Heart right ventricle (tissue), 16 donors: ENCODE measurements at regions of chr5 and their contacts with region 1.

Region 1: DNA sequence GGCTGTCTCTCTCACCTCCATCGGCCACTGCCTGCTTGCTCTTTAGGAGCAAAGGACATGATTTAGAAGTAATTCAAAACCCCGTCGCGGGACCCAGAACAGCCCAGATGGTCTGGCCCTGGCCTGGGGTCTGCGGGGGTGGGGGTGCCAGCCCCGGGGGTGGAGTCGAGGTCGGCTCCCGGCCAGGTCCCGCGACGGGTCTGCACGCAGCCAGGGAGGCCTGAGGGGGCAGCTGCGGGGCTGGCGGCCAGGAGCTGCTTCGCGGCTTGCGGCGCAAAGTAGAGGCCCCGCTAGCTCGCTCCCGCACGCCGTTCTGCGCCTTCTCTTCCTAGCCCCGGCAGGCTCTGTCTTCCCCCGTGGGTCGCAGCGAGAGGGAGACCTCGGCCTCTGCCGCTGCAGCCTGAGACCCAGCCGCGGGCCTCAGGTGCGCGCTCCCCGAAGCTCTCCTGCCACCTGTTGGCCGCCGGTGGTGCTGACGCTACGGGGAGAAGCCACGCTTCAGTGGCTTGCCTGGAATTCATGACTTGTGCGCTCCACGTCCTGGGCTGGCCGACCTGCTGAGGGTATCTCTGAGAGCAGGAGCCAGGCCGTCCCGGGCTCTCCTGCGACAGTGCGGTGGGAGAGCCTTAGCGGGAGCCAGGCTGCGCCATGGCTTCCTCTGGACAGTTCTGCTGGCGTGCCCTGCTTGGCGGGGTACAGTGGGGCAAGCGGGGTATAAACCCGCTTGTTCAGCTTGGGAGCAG is 157.2 kb upstream of the PITX1 start:
- DNase-seq: peak; percentile 63 to 75
- ATAC-seq: peak; percentile 89 to 96 (median 91)
- H3K4me3 ChIP-seq: peak overlapping the region in 9 of 10 donors; percentile 34 to 53 (median 51)
- H3K27ac ChIP-seq: no peak overlapping the region
- H3K4me1 ChIP-seq: peaks cover 0 to 15% (median 7%) of the 10 kb centered on the region in 9 donors
- H3K27me3 ChIP-seq: peaks cover 0 to 71% (median 59%) of the 10 kb centered on the region in 7 donors
- CTCF ChIP-seq: peak; percentile 73 to 95 (median 86)

Region 2: DNA sequence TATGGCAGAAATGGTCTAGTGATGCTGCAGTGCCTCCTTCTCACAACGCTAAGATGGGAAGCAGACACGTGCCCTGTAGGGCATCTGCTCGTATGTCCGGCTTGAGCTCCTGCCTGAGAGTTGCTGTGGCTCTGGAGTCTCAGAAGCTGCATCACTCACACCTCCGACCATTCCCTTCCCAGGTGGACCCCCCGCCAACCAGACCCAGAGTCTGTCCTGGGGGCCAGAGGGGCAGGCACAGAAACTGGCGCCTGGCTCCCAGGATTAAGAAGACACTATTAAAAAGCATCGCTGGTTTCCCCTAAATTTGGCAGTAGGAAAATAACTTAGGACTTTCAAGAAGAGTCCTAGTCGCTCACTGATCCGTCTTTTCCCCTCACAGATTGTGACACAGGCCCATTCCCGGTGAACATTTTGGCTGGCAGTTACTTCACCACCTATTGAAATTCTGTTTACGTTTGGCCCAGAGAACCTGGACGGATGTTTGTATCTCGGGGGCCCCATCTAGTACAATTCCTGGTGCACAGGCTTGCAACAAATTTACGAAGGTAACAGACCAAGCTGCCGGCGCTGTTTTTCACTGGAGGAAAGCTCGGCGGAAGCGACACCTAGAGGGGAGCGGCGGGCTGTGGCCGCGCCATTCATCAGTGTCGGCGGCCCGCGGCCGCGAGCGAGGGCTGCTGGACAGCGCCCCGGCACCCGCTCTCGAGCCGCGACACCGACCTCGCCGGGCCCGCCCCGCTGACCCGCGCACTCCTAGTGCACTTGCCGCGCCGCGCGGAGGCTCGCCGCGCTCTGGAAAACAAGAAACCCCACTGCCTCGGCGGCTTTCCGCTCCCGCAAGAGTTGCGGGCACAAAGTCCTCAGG is 1580.5 kb before region 1 on chr5:
- intact Hi-C with region 1: no loop called
- DNase-seq: peak; percentile 45 to 64
- ATAC-seq: peak; percentile 93 to 97 (median 96)
- H3K4me3 ChIP-seq: peak overlapping the region in 9 of 10 donors; percentile 22 to 45 (median 38)
- H3K27ac ChIP-seq: no peak overlapping the region
- H3K4me1 ChIP-seq: peaks cover 8 to 35% (median 15%) of the 10 kb centered on the region in 9 donors
- H3K27me3 ChIP-seq: peaks cover 15 to 84% (median 76%) of the 10 kb centered on the region in 7 donors
- CTCF ChIP-seq: peak; percentile 33 to 73 (median 56)

Region 3: DNA sequence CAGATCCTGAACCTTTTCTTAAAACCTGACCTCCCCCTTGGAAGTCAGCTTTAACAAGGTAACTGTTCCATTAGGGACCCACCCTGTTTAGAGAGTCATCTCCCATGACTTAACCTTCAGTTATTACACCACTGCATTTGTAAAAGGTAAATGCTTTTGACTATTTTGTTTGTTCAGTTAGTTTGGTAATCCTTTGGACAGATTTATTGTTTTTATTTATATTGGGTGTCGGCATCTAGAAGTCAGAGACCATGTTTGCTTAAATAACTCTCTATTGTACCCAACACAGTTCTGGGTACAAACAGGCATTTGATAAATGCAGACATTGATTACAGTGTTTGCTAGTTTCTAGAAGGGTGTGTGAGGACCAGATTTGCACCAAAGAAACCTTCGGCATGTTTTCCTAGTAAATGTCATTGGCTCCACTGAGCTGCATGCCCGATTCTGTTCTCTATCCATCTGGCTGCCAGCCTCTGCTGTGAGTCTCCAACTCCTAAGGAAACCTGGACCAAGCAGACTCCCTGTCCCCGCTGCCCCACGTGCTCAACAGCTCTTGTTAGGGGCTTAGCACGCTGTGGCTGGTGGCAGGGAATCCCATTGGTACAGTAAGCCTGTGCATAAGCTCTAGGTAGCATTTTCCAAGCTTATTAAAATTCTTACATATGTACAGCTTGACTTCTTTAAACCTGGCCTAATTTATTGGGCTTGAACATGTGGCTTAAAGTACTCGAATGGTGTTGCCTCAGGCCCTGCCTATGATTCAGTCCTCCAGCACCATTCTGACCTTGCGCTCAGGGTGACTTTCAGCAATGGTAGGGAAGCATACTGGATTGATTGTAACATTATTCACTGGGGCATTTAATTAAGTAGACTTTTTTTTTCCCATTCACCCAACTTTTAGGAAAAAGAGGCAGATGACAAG is 279.7 kb before region 1 on chr5:
- intact Hi-C with region 1: loop called in 2 of 10 experiments (anchors 5 to 10 kb)
- DNase-seq: no peak
- ATAC-seq: no peak
- H3K4me3 ChIP-seq: no peak overlapping the region
- H3K27ac ChIP-seq: no peak overlapping the region
- H3K4me1 ChIP-seq: peaks cover 0 to 5% (median 0%) of the 10 kb centered on the region in 9 donors
- H3K27me3 ChIP-seq: no peaks in the 10 kb centered on the region
- CTCF ChIP-seq: no peak

Region 4: DNA sequence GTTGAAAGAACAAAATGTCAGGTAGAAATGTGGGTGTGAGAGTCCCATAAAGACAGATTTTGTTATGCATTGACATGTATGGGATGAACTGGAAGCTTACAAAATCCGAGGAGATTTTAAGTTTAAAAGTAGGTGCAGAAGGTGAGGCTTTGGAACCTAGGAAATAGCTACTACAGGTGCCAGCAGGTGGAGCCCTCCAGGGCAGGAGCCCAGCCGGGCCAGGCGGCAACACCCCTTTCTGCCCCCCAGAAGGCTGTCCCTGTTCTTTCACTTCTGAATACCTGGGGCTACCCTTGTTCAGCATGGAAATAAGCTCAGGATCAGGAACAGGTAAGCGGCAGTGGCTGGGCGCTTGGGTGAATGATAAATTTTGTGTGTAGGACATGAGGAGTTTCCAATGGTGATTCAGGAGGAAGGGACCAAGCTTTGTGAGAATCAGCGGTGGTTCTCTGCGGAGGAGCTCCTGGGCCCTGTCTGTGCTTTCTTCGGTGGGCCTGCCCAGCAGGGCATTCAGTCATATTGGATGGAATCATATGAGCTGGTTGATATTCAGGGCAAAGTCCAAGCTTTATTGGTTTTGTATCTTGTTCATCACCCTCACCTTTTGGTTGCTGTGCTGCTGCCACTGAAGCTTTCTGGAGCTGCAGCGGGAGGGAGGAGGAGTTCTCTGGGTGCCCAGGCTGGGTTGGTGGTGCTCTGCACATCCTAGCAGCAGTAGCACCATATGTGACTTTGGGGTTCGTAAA is 274.0 kb before region 1 on chr5:
- intact Hi-C with region 1: loop called in 2 of 10 experiments (anchors 5 to 10 kb)
- DNase-seq: no peak
- ATAC-seq: no peak
- H3K4me3 ChIP-seq: no peak overlapping the region
- H3K27ac ChIP-seq: no peak overlapping the region
- H3K4me1 ChIP-seq: peaks cover 0 to 5% (median 0%) of the 10 kb centered on the region in 9 donors
- H3K27me3 ChIP-seq: no peaks in the 10 kb centered on the region
- CTCF ChIP-seq: peak in 4 of 9 donors; percentile 14 to 27 (median 20)

Region 5: GRCh38 chr5:134935711-134936602 is 255.3 kb before region 1 on chr5:
- intact Hi-C with region 1: loop called in 1 of 10 experiments (anchors 10 kb)
- DNase-seq: no peak
- ATAC-seq: no peak
- H3K4me3 ChIP-seq: no peak overlapping the region
- H3K27ac ChIP-seq: no peak overlapping the region
- H3K4me1 ChIP-seq: no peaks in the 10 kb centered on the region
- H3K27me3 ChIP-seq: no peaks in the 10 kb centered on the region
- CTCF ChIP-seq: no peak

Region 6: GRCh38 chr5:135053278-135053677 is 138.0 kb before region 1 on chr5:
- intact Hi-C with region 1: loop called in 3 of 10 experiments (anchors 5 to 10 kb)
- DNase-seq: no peak
- ATAC-seq: no peak
- H3K4me3 ChIP-seq: no peak overlapping the region
- H3K27ac ChIP-seq: no peak overlapping the region
- H3K4me1 ChIP-seq: peaks cover 0 to 13% (median 0%) of the 10 kb centered on the region in 9 donors
- H3K27me3 ChIP-seq: peaks cover 6 to 62% (median 55%) of the 10 kb centered on the region in 7 donors
- CTCF ChIP-seq: no peak

Region 7: GRCh38 chr5:135059000-135059923 is 132.0 kb before region 1 on chr5:
- intact Hi-C with region 1: loop called in 3 of 10 experiments (anchors 5 to 10 kb)
- DNase-seq: no peak
- ATAC-seq: no peak
- H3K4me3 ChIP-seq: no peak overlapping the region
- H3K27ac ChIP-seq: no peak overlapping the region
- H3K4me1 ChIP-seq: peaks cover 0 to 14% (median 0%) of the 10 kb centered on the region in 9 donors
- H3K27me3 ChIP-seq: peaks cover 0 to 29% (median 6%) of the 10 kb centered on the region in 7 donors
- CTCF ChIP-seq: no peak

Region 8: DNA sequence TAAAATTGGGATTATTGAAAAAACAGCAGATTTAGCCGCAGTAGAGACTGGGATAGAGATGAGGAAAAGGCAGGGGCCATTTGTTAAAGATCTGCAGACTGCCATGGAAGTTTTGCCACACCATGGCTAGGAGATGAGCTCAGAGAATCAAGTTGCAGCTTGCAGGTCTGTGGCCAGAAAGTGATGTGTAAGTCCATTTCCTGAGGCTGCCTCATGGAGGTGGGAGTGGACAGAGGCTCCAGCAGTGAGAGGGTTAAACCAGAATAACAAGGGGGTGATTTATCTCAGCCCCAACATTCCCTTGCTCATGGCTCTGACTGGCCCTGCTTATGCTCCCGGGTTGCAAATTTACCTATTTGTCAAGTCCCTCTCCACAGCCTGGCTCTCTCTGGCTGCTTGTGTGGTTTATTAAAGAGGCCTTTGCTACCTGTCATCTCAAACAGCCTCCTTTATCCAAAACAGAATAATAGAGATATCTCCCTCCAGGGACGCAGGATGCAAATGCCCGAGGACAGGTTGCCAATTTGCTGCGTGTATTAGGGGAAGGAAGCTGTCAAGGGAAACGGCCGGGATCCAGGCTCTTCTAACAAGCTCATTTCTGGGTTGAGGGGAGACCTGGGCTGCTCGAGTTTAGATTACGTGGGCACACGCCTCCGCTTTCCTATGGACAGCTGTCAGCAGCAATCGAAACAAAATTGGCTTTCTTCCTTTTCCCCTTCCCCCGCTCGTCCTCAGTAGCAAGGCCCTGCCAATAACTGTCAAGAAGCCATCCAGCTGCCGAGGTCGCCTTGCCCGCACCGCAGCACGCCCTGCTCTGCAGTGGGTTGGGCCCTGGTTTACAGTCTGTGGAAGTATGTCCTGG is 84.4 kb before region 1 on chr5:
- intact Hi-C with region 1: no loop called
- DNase-seq: no peak
- ATAC-seq: no peak
- H3K4me3 ChIP-seq: no peak overlapping the region
- H3K27ac ChIP-seq: no peak overlapping the region
- H3K4me1 ChIP-seq: peaks cover 0 to 4% (median 0%) of the 10 kb centered on the region in 9 donors
- H3K27me3 ChIP-seq: peaks cover 0 to 40% (median 13%) of the 10 kb centered on the region in 7 donors
- CTCF ChIP-seq: no peak

Region 9: DNA sequence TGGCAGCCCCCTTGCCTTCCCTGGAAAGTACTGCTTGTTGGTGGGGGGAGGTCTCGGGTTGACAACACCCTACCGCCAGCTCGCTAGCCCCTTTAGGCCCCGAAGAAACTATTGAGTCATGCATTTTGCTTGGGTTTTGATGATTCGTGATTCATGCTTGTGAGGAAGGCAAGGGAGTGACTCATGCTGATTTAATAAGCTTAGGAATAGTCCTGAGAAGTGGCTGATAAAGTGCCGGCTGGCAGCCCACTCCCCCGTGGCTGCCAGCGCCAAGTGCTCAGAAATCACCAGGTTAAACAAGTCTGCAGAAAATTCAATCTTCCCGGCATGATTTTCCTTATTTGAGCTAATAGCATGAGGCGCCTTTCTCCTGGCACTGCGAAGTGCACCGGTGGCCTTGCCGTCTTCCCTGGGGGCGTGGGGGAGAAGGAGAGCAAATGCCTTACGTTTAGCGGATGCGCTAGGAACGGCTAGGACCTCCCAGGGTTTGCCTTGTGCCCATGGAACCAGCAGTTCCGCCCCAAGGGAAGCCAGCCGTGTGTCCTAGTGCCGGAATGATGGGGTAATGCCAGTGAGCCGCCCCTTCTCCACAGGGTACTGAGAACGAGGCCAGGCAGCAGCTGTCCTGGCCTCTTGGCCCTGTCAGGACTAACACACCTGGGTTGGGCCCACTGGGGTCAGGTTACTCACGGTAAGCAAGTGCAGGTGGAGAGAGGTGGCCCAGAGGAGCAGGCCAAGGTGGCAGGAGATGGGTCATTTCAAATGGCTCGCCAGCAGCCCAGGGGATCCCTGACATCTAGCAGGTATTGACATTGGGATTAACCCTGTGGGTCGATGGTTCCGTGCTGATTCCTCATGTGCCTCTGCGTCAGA is 55.9 kb after region 1 on chr5:
- intact Hi-C with region 1: no loop called
- DNase-seq: no peak
- ATAC-seq: peak in 1 of 8 donors; percentile 30
- H3K4me3 ChIP-seq: no peak overlapping the region
- H3K27ac ChIP-seq: no peak overlapping the region
- H3K4me1 ChIP-seq: peaks cover 0 to 44% (median 26%) of the 10 kb centered on the region in 9 donors
- H3K27me3 ChIP-seq: no peaks in the 10 kb centered on the region
- CTCF ChIP-seq: no peak

Region 10: DNA sequence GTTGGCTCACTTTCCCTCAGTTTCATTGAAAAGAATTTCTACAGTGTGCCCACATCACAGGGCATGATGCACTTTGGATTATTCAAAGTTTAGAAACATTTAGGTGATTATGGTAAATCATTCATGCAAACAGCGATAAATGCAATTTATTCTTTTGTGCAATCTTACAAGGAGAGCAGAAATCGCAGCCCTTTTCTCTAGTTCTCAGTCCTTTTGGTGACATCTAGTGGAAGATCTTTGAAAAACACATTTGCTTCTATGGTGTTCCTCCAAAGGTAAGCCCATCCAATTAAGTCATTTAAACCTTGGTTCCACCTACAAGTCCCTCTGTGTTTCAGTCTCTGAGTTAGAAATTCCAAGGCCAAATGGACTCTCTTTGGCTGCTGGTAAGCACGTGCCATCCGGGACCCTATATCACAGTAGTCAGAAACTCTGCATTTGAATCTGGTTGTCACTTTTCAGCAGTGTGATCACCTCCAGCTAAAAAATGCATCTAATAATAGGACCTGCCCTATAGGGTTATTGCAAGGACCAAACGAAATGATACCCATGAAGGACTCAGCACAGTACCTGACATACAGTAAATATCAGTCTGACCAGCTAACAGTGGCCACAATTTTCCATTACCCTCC is 141.4 kb after region 1 on chr5:
- intact Hi-C with region 1: loop called in 3 of 10 experiments (anchors 5 to 10 kb)
- DNase-seq: no peak
- ATAC-seq: no peak
- H3K4me3 ChIP-seq: no peak overlapping the region
- H3K27ac ChIP-seq: no peak overlapping the region
- H3K4me1 ChIP-seq: peaks cover 0 to 25% (median 0%) of the 10 kb centered on the region in 9 donors
- H3K27me3 ChIP-seq: no peaks in the 10 kb centered on the region
- CTCF ChIP-seq: peak in 8 of 9 donors; percentile 7 to 65 (median 53)

Region 11: GRCh38 chr5:136703706-136704105 is 1512.5 kb after region 1 on chr5:
- intact Hi-C with region 1: no loop called
- DNase-seq: no peak
- ATAC-seq: no peak
- H3K4me3 ChIP-seq: no peak overlapping the region
- H3K27ac ChIP-seq: no peak overlapping the region
- H3K4me1 ChIP-seq: no peaks in the 10 kb centered on the region
- H3K27me3 ChIP-seq: peaks cover 0 to 26% (median 0%) of the 10 kb centered on the region in 7 donors
- CTCF ChIP-seq: no peak